ENCODE measurements at regions of chr16 and their contacts with region 1.

Region 1: GRCh38 chr16:75110637-75111513 is 5.7 kb downstream of the LDHD start:
- DNase-seq: peak; percentile 87
- H3K4me3 Mint-ChIP-seq: peak overlapping the region; percentile 46
- H3K27ac Mint-ChIP-seq: peak overlapping the region; percentile 88
- H3K4me1 Mint-ChIP-seq: peaks cover 62% of the 10 kb centered on the region
- H3K27me3 Mint-ChIP-seq: no peaks in the 10 kb centered on the region

Region 2: DNA sequence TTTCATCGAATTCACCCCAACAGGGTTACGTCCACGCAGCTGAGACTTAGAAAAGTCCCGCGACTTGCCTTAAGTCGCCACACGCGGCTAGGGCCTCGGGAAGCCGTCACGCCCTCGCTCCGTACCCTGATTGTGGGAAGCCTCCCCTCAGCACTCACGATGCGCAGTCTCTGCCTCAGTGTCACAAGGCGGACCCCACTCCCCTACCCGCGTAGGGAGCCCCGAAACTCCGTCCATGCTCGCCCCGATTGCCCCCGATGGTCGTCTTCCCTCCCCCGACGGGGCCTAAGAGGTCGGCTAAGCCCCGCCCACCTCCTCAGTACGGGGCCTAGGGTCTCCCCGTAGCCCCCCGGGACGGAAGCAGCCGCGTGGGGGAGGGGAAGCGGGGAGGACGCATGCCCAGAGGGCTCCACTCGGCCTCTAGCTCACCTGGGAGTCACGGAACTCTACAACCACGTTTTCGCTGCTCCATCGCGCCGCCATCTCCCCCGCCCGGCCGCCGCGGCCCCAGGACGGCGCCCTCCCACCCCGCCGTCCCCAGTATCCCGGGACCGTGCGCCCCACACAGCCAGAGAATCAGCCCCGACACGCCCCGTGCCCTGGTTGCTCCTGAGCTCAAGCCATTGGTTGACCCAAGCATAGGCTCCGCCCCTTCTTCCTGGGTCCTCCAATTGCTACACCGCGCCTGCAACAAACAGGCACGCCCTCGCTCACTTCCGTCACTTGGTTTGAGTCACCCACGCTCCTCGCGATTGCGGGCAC is 126.2 kb before region 1 on chr16 and contains the start of gene WDR59:
- CTCF ChIA-PET with region 1: interaction called, 56 read pairs
- POLR2A ChIA-PET with region 1: interaction called, 4 read pairs
- DNase-seq: peak; percentile 100
- H3K4me3 Mint-ChIP-seq: peak within 1 kb of the TSS; percentile 91
- H3K27ac Mint-ChIP-seq: peak within 1 kb of the TSS; percentile 92
- H3K4me1 Mint-ChIP-seq: peaks cover 23% of the 10 kb centered on the region
- H3K27me3 Mint-ChIP-seq: no peaks in the 10 kb centered on the region
- total RNA-seq, gene WDR59: 65.8 TPM

Region 3: DNA sequence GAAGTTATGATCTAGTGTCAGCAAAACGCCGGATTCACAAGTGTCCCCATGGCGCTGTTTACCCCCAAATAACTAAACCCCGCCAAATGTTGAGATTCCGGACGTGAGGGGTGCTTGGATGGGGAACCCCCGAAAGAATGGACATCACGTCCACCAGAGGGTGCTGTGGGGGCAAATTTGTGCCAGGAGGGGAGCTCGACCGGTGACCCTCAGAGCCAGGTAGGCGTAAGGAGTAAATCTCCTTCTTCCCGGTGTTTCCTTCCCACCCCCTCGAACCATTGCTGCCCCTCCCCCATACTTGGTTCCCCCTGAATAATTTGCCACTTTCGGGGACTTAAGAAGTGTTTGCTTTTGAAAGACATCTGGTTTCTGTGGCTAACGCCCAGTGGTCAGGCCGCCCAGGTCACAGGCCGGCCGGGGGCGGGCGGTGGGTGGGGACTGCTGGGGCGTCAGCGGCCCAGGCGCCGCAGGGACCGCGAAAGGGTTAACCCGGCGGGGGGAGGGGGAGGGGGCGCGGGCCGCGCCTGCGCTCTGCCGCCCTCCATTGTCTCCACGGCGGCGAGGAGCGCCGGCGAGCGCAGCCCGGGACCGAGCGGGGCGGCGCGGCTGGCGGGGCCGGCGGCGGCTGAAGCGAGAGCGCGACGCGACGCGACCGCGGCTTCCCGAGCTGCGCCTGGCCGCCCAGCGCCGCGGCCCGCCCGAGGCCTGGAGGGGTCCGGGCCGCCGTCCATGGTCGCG is 112.2 kb before region 1 on chr16 and contains the start of gene ZNRF1:
- CTCF ChIA-PET with region 1: interaction called, 84 read pairs
- POLR2A ChIA-PET with region 1: interaction called, 5 read pairs
- DNase-seq: peak; percentile 83
- H3K4me3 Mint-ChIP-seq: peak within 1 kb of the TSS; percentile 81
- H3K27ac Mint-ChIP-seq: peak within 1 kb of the TSS; percentile 86
- H3K4me1 Mint-ChIP-seq: peaks cover 32% of the 10 kb centered on the region
- H3K27me3 Mint-ChIP-seq: peaks cover 18% of the 10 kb centered on the region
- total RNA-seq, gene ZNRF1: 16.1 to 16.3 TPM

Region 4: GRCh38 chr16:75064403-75065148 is 46.3 kb before region 1 on chr16:
- CTCF ChIA-PET with region 1: interaction called, 12 read pairs
- POLR2A ChIA-PET with region 1: no interaction called
- DNase-seq: peak; percentile 31
- H3K4me3 Mint-ChIP-seq: peak overlapping the region; percentile 58
- H3K27ac Mint-ChIP-seq: peak overlapping the region; percentile 85
- H3K4me1 Mint-ChIP-seq: peaks cover 64% of the 10 kb centered on the region
- H3K27me3 Mint-ChIP-seq: no peaks in the 10 kb centered on the region

Region 5: DNA sequence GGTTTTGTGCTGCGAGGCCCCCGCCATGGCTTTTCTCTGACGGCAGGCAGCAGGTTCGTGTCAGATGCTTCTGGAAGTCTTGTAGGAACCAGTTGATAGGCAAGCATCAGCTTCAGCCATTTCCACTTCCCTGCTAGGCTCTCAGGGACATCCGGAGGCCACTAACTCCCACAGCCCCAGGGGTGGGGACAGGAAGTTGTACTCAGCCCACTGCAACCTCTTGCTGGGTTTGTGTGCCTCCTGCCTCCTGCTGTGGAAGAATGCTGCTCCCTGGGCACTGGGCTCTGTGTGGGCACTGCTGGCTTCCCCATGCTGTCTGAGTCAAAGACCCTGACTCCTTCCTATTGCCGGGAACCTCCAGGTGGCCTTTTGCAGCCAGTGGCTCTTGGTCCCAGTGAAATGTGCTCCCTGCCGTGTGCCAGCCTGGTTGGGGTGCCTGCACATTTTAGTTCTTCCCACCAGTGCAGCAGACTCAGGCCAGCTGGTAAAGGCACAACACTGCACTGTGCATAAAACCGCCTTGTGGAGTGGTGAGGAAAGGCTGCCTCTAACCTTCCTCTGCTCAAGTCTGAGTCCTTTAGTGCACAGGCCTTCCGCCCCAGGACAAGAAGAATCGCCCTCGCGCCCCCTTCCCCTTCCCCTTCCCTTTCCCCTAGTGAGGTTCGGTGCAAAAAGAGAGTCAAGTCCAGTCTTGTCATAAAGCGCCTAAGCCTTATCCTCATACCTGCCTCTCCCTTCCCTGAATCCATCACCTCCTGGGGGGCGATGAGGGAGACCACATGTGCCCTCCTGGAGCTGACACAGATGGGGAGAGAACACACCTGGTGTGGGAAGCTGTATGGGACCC is 10.9 kb before region 1 on chr16:
- CTCF ChIA-PET with region 1: interaction called, 37 read pairs
- POLR2A ChIA-PET with region 1: no interaction called
- DNase-seq: peak; percentile 57
- H3K4me3 Mint-ChIP-seq: peak overlapping the region; percentile 32
- H3K27ac Mint-ChIP-seq: peak overlapping the region; percentile 90
- H3K4me1 Mint-ChIP-seq: peaks cover 56% of the 10 kb centered on the region
- H3K27me3 Mint-ChIP-seq: no peaks in the 10 kb centered on the region

Region 6: GRCh38 chr16:75130150-75130771 is 19.4 kb after region 1 on chr16:
- CTCF ChIA-PET with region 1: interaction called, 12 read pairs
- POLR2A ChIA-PET with region 1: no interaction called
- DNase-seq: no peak
- H3K4me3 Mint-ChIP-seq: no peak overlapping the region
- H3K27ac Mint-ChIP-seq: no peak overlapping the region
- H3K4me1 Mint-ChIP-seq: peaks cover 10% of the 10 kb centered on the region
- H3K27me3 Mint-ChIP-seq: no peaks in the 10 kb centered on the region